K562 (cell line): ENCODE measurements at regions of chr10 and their contacts with region 1.

Region 1: DNA sequence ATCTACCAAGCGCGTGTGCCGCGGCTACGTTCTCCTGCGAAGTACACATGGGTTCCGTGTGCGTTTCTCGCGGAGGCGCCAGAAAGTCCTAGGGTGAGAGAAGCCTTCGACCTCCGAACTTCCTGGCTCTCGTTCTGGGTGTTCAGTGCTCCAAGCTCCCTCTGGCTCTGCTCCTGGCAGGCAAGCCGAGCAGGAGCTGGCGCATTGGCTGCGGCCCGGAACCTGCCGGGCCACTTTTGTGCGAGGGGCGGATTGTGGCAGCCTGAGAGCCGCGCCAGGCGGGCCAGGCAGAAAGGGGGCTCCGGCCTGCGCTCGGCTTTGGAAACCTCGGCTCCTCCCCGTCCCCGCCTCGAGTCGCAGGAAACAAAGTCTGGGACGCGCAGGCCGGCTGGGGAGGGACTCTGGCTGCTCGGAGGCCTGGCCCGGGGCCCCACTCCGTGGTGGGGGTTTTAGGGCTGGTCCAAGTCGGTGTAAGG is 9.6 kb downstream of the EMX2 start:
- DNase-seq: no peak
- ATAC-seq: no peak
- H3K4me3 ChIP-seq: no peak overlapping the region
- H3K27ac ChIP-seq: no peak overlapping the region
- H3K4me1 ChIP-seq: peaks cover 0 to 14% of the 10 kb centered on the region in 2 experiments; a peak in 2 of 5 replicates
- H3K27me3 ChIP-seq: peaks cover 5 to 58% of the 10 kb centered on the region in 2 experiments
- CTCF ChIP-seq: no peak
- EP300 ChIP-seq: no peak
- POLR2A ChIP-seq: no peak
- RAD21 ChIP-seq: no peak

Region 2: DNA sequence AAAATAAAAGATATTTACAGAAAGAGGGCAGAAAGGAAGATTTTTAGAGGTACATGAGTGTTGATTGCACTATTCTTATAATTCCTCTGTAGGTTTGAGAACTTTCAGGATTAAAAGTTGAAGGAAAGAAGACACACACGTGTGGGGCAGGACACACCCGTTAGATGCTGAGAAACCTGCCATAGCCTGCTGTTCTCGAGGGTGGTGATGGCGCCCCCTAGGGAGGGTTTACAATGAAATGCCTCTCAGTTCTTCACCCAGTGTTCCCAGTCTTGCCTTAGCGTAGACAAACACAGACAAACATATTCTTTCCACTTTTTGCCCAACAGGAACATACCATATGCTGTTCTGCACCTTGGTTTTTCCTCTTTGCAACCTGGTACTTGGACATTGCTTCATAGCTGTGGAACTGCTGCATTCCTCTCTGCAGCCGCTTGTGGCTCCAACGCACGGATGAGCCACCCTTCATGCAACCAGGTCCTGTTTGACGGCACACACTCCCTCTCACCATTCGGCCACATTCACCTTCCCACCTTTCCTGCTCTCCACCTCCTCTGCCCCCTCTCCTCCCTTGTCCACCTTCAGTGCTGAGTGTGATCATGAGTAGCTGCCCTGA is 786.5 kb before region 1 on chr10:
- CTCF ChIA-PET with region 1: no interaction called
- POLR2A ChIA-PET with region 1: no interaction called
- in situ Hi-C with region 1: no loop called
- intact Hi-C with region 1: no loop called
- DNase-seq: peak; percentile 55 to 61 (median 58)
- ATAC-seq: peak; percentile 91
- H3K4me3 ChIP-seq: no peak overlapping the region
- H3K27ac ChIP-seq: no peak overlapping the region
- H3K4me1 ChIP-seq: no peaks in the 10 kb centered on the region; a peak in 1 of 5 replicates
- H3K27me3 ChIP-seq: peaks cover 0 to 20% of the 10 kb centered on the region in 2 experiments; a peak in 3 of 5 replicates
- CTCF ChIP-seq: peak; percentile 61 to 68 (median 64)
- EP300 ChIP-seq: no peak
- POLR2A ChIP-seq: no peak
- RAD21 ChIP-seq: peak; percentile 13 to 52; a peak in 2 of 4 replicates

Region 3: GRCh38 chr10:116866987-116867595 is 685.1 kb before region 1 on chr10:
- CTCF ChIA-PET with region 1: no interaction called
- POLR2A ChIA-PET with region 1: no interaction called
- in situ Hi-C with region 1: no loop called
- intact Hi-C with region 1: no loop called
- DNase-seq: no peak
- ATAC-seq: no peak
- H3K4me3 ChIP-seq: no peak overlapping the region
- H3K27ac ChIP-seq: no peak overlapping the region
- H3K4me1 ChIP-seq: no peaks in the 10 kb centered on the region
- H3K27me3 ChIP-seq: peaks cover 0 to 5% of the 10 kb centered on the region in 2 experiments; a peak in 2 of 5 replicates
- CTCF ChIP-seq: no peak
- EP300 ChIP-seq: no peak
- POLR2A ChIP-seq: no peak
- RAD21 ChIP-seq: no peak

Region 4: DNA sequence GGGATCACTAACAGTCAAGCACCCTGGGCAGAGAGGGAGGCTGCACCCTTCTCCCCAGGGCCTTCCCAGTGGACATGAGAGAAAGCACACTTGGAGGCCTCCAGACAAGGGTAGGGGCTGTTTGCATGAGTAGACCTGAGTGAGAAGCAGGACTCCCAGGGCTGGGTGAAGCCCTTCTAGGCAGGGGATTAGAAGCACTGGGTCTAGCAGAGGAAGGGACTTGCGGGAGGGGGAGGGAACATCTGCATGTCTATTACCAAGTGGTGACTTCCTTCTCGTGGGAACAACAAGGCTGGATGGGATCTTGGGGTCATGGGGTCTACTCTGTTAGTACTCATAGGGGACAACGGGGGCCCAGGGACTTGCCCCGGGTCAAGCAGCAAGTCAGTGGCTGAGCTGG is 58.1 kb after region 1 on chr10:
- CTCF ChIA-PET with region 1: no interaction called
- POLR2A ChIA-PET with region 1: no interaction called
- in situ Hi-C with region 1: no loop called
- intact Hi-C with region 1: loop called (anchors 5 kb)
- DNase-seq: no peak
- ATAC-seq: no peak
- H3K4me3 ChIP-seq: no peak overlapping the region
- H3K27ac ChIP-seq: no peak overlapping the region
- H3K4me1 ChIP-seq: no peaks in the 10 kb centered on the region; a peak in 1 of 5 replicates
- H3K27me3 ChIP-seq: peaks cover 0 to 24% of the 10 kb centered on the region in 2 experiments; a peak in 2 of 5 replicates
- CTCF ChIP-seq: no peak
- EP300 ChIP-seq: no peak
- POLR2A ChIP-seq: no peak
- RAD21 ChIP-seq: no peak